Mammary epithelial cell (primary cell): ENCODE measurements at regions of chr15 and their contacts with region 1.

Region 1: DNA sequence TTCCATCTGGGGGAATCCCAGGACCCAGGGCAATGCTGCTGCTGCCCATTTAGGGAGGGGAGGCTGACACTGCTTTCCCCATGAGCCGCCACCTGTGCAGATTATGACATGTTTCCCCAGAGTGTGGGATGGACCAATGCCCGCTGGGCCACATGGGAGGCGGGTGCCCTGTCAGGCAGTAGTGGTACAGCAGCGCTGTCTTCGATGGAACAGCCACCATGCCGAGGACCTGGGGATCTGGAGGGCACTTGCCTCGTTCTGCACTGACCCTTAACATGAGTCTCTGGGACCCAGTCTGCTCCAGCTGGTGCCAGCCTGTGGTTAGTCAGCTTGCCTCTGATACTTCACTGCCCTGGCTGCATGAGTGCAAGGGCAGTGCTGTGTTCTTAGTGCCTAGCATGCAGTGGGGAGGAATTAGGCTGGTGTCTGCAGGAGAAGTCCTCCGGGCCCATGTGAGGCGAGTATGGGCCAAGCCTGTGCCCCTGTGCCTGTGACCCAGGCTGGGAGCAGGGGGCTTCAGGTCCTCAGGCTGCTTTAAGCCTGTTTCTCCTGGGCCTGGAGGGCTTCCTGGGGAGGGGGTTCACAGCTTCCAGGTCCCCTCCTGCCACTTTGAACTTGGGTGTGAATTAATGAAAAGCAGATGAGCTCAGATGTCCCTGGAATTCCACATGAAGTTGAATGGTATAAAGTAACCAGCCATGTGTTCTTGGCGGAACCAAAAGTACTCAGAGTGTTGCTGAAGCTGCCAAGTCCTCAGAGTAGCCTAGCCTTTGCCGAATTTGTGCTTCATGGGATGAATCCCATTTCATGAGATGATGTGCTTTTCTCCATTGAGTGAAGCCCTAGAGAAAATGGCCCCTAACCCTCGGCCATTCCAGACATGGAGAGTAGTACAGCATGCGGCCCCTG is 22.9 kb downstream of the KLF13 start:
- DNase-seq: no peak
- H3K4me3 ChIP-seq: no peak overlapping the region
- H3K27ac ChIP-seq: no peak overlapping the region
- H3K4me1 ChIP-seq: peaks cover 49% of the 10 kb centered on the region
- H3K27me3 ChIP-seq: no peaks in the 10 kb centered on the region
- CTCF ChIP-seq: no peak

Region 2: GRCh38 chr15:30903497-30904201 is 445.8 kb before region 1 on chr15 and contains the start of gene FAN1:
- CTCF ChIA-PET with region 1: no interaction called
- dilution Hi-C with region 1: no loop called
- in situ Hi-C with region 1: no loop called
- intact Hi-C with region 1: no loop called
- DNase-seq: peak; percentile 85
- H3K4me3 ChIP-seq: peak within 1 kb of the TSS; percentile 90 to 94 (median 92)
- H3K27ac ChIP-seq: peak within 1 kb of the TSS; percentile 34
- H3K4me1 ChIP-seq: peaks cover 7% of the 10 kb centered on the region
- H3K27me3 ChIP-seq: no peaks in the 10 kb centered on the region
- CTCF ChIP-seq: no peak
- total RNA-seq, gene FAN1: 21.5 to 23.8 TPM

Region 3: DNA sequence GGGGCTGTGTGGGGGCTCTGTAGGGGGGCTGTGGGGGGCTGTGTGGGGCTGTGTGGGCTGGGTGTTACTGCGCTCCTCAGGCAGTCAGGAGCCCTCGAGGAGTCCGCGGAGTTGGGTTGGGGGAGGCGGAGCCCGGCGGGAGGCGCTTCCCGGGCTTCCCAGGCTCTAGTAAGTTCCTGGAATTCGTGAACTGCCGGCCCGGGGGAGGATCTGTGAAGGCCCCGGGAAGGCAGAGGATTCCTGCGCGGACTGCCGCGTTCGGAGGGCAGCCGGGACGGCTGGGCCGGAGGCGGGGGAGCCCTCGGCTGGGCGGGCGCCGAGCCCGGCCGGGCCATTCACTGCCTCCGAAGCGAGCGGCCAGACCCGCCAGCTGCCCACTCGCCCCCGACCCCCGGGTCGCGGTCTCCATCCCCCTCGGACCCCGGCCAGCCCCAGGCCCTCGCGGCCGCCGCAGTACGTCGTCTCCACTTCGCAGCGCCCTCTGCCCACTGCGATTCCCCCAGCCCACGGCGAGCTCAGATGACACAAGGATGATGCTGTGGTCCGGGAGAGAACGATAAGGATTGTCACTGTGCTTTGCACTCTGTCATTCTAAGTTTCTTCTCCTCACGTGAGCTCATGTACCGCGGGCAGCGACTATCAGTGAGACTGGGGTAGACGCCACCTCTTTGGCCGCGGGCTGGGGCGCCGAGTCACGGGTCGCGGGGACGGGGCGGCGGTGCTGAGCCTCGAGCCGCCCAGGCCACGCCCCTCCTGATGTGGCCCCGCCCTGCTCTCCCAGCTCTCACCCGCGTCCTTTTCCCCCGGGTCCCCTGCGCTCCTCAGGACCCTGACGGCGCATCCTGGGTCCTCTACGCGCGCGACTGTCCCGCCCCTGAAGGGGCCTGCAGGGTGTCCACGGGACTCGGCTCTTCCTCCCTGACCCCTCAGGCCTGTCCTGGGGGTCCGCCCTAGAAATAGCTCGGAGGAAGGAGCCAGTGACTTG is 42.5 kb after region 1 on chr15:
- CTCF ChIA-PET with region 1: no interaction called
- dilution Hi-C with region 1: no loop called
- in situ Hi-C with region 1: no loop called
- intact Hi-C with region 1: loop called (anchors 2 kb)
- DNase-seq: peak; percentile 41
- H3K4me3 ChIP-seq: peak overlapping the region; percentile 63 to 79 (median 68)
- H3K27ac ChIP-seq: peak overlapping the region; percentile 12
- H3K4me1 ChIP-seq: peaks cover 30% of the 10 kb centered on the region
- H3K27me3 ChIP-seq: no peaks in the 10 kb centered on the region
- CTCF ChIP-seq: no peak